CD8-positive, alpha-beta memory T cell (primary cell): ENCODE measurements at regions of chr3 and their contacts with region 1.

Region 1: DNA sequence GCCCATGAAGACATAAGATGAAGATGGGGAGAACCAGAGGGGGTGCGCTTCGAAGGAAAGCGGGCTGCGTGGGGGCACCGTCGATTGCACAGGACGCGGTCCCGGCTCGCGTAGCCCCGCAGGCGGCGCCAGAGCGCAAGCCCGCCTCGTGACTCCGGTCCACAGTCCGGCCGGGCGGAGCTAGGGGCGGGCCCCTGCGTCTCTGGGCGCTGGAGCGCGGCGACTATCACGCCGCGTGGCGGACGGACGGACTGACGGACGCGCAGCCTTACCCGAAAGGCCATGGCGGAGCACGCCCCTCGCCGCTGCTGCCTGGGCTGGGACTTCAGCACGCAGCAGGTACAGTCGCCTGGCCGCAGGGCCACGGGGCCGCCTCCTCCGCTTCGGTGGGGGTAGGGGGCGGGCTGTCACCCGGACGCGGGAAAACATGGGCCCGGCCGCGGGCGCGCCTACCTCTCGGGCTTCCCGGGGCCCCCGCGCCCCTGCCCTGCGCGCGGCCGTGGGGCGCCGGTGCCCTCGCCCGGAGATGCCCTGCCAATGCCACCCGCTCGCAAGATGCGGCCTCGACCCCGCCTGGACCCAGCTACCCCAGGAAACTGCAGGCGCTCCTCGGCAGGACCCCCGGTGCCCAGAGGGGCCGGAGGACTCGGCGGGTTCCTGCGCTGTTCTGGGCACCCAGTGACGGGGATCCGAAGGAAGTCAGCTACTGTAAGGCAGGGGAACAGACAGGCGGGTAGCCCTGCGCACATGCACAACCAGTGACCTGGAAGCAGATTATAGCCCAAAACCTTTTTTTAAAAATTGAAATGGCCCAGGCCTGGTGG is at the start of gene XYLB:
- DNase-seq: peak; percentile 54 to 77 (median 65)
- H3K4me3 ChIP-seq: peak within 1 kb of the TSS; percentile 59
- H3K4me3 Mint-ChIP-seq: peak within 1 kb of the TSS; percentile 74 to 93 (median 83)
- H3K27ac ChIP-seq: peak within 1 kb of the TSS; percentile 63
- H3K27ac Mint-ChIP-seq: peak within 1 kb of the TSS in 3 of 8 donors; percentile 45 to 81 (median 66)
- H3K4me1 ChIP-seq: no peaks in the 10 kb centered on the region
- H3K4me1 Mint-ChIP-seq: peaks cover 0 to 10% (median 2%) of the 10 kb centered on the region in 3 donors
- H3K27me3 ChIP-seq: no peaks in the 10 kb centered on the region
- H3K27me3 Mint-ChIP-seq: peaks cover 0 to 6% of the 10 kb centered on the region in 2 donors
- total RNA-seq, gene XYLB: 5.7 to 6.2 TPM

Region 2: DNA sequence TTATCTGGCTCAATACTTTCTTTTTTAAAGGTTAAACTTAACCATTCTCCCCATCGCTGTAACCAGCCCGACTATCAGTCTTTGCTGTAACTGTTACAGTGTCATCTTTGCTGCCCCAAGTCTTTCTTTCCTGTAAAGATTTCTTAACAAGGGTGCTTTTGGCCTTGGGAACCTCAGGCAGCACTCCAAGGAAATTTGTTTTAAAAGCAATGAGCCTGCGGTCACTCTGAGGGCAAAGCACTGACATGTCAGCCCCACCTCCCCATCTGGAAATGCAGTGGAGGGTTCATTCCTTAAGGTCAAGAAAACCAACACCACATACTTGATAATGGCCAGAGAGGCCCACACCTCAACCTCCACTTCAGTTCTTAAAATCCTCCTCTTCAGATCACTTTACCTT is 1405.1 kb before region 1 on chr3:
- CTCF ChIA-PET with region 1: no interaction called
- POLR2A ChIA-PET with region 1: no interaction called
- DNase-seq: no peak
- H3K4me3 ChIP-seq: no peak overlapping the region
- H3K4me3 Mint-ChIP-seq: peak overlapping the region in 2 of 7 donors; percentile 15 to 46
- H3K27ac ChIP-seq: peak overlapping the region; percentile 6
- H3K27ac Mint-ChIP-seq: peak overlapping the region in 5 of 8 donors; percentile 15 to 90 (median 38)
- H3K4me1 ChIP-seq: peaks cover 14% of the 10 kb centered on the region
- H3K4me1 Mint-ChIP-seq: peaks cover 23 to 51% (median 28%) of the 10 kb centered on the region in 3 donors
- H3K27me3 ChIP-seq: no peaks in the 10 kb centered on the region
- H3K27me3 Mint-ChIP-seq: no peaks in the 10 kb centered on the region

Region 3: DNA sequence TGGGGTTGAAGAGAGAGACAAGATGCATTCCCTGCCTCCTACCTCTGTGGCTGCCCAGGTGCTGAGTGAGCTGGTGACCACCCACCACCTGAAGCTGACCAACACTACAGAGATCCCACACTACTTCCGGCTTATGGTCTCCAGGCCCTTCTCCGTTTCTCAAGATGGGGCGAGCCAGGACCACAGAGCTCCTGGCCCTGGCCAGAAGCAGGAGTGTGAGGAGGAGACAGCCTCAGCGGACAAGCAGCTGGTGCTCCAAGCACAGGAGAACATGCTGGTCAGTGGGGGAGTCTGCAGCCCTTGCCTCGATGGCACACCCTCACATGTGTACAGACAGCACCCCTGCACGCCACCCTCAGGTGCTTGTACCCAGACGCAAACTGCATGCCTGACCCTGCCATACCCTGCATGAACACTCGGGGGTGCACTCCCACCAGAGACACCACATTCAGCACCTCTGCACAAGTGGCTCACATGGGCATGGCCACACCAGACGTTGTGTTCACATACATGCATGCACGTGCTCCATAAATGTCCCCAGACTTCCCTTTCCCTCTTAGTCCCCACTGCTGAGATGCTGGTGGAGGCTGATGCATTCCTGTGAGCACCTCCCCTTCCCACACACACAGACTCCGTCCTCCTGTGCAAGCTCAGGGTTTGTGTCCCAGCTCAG is 228.9 kb before region 1 on chr3:
- CTCF ChIA-PET with region 1: interaction called, 19 read pairs
- POLR2A ChIA-PET with region 1: no interaction called
- DNase-seq: peak; percentile 51 to 80 (median 57)
- H3K4me3 ChIP-seq: no peak overlapping the region
- H3K4me3 Mint-ChIP-seq: no peak overlapping the region
- H3K27ac ChIP-seq: no peak overlapping the region
- H3K27ac Mint-ChIP-seq: peak overlapping the region in 4 of 8 donors; percentile 51 to 88 (median 63)
- H3K4me1 ChIP-seq: no peaks in the 10 kb centered on the region
- H3K4me1 Mint-ChIP-seq: peaks cover 4 to 11% (median 5%) of the 10 kb centered on the region in 3 donors
- H3K27me3 ChIP-seq: no peaks in the 10 kb centered on the region
- H3K27me3 Mint-ChIP-seq: no peaks in the 10 kb centered on the region

Region 4: DNA sequence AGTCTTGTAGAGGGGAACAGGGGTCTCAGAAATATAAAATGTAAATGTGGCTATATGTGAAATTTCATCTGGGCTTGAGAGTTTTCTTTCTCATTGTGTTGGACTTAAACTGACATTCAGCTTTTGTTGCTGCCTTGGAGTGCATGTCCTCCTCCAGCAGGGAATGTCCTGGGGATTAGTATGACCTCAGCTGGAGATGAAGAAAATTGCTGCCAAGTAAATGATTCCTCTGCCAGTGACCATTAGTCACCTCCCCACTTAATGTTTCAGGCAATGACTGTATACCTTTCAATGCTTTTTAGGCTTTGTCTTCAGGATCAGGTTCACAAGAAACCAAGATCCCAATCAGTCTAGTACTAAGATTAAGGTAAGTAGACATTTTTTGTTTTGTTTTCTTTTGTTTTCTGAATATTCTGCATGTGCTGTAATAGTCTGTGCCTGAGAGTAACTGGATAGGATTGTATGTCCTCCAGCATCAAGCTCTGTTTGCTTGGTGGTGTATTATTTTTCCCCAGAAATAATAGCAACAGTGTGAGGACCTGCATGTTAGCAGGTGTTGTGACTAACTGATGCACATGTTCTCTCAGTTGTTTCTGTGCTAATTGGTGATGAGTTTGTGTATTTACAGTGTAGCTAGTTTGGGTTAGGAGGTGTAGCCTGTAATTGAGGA is 99.3 kb before region 1 on chr3:
- CTCF ChIA-PET with region 1: no interaction called
- POLR2A ChIA-PET with region 1: no interaction called
- DNase-seq: no peak
- H3K4me3 ChIP-seq: no peak overlapping the region
- H3K4me3 Mint-ChIP-seq: no peak overlapping the region
- H3K27ac ChIP-seq: no peak overlapping the region
- H3K27ac Mint-ChIP-seq: peak overlapping the region in 4 of 8 donors; percentile 38 to 67 (median 56)
- H3K4me1 ChIP-seq: no peaks in the 10 kb centered on the region
- H3K4me1 Mint-ChIP-seq: peaks cover 3 to 10% (median 6%) of the 10 kb centered on the region in 3 donors
- H3K27me3 ChIP-seq: no peaks in the 10 kb centered on the region
- H3K27me3 Mint-ChIP-seq: no peaks in the 10 kb centered on the region

Region 5: GRCh38 chr3:38334142-38335055 is 12.4 kb before region 1 on chr3:
- CTCF ChIA-PET with region 1: interaction called, 20 read pairs
- POLR2A ChIA-PET with region 1: no interaction called
- DNase-seq: no peak
- H3K4me3 ChIP-seq: no peak overlapping the region
- H3K4me3 Mint-ChIP-seq: no peak overlapping the region
- H3K27ac ChIP-seq: no peak overlapping the region
- H3K27ac Mint-ChIP-seq: no peak overlapping the region
- H3K4me1 ChIP-seq: no peaks in the 10 kb centered on the region
- H3K4me1 Mint-ChIP-seq: no peaks in the 10 kb centered on the region
- H3K27me3 ChIP-seq: no peaks in the 10 kb centered on the region
- H3K27me3 Mint-ChIP-seq: peaks cover 3 to 9% of the 10 kb centered on the region in 2 donors

Region 6: DNA sequence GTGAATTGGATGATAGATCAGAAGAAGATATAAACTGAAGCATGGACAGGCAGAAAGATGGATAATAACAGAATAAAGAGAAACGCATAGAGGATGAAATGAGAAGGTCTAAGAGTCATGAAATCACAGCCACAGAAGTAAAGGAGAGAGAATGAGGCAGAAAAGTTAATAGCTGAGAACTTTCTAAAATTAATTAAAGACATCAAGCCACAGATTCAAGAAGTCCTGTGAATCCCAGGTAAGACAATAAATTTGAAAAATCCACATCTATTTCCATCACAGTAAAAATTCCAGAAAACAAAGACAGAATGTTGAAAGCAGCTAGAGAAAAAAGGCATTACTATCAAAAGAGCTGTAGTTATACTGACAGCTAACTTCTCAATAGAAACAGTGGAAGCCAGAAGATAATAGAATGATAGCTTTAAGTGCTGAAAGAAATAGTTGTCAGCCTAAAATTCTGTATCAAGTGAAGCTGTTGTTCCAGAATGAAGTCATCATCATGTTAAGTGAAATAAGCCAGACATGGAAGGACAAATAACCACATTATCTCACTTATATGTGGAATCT is 118.9 kb after region 1 on chr3:
- CTCF ChIA-PET with region 1: interaction called, 12 read pairs
- POLR2A ChIA-PET with region 1: no interaction called
- DNase-seq: no peak
- H3K4me3 ChIP-seq: no peak overlapping the region
- H3K4me3 Mint-ChIP-seq: no peak overlapping the region
- H3K27ac ChIP-seq: no peak overlapping the region
- H3K27ac Mint-ChIP-seq: no peak overlapping the region
- H3K4me1 ChIP-seq: no peaks in the 10 kb centered on the region
- H3K4me1 Mint-ChIP-seq: peaks cover 0 to 7% (median 4%) of the 10 kb centered on the region in 3 donors
- H3K27me3 ChIP-seq: no peaks in the 10 kb centered on the region
- H3K27me3 Mint-ChIP-seq: no peaks in the 10 kb centered on the region

Region 7: DNA sequence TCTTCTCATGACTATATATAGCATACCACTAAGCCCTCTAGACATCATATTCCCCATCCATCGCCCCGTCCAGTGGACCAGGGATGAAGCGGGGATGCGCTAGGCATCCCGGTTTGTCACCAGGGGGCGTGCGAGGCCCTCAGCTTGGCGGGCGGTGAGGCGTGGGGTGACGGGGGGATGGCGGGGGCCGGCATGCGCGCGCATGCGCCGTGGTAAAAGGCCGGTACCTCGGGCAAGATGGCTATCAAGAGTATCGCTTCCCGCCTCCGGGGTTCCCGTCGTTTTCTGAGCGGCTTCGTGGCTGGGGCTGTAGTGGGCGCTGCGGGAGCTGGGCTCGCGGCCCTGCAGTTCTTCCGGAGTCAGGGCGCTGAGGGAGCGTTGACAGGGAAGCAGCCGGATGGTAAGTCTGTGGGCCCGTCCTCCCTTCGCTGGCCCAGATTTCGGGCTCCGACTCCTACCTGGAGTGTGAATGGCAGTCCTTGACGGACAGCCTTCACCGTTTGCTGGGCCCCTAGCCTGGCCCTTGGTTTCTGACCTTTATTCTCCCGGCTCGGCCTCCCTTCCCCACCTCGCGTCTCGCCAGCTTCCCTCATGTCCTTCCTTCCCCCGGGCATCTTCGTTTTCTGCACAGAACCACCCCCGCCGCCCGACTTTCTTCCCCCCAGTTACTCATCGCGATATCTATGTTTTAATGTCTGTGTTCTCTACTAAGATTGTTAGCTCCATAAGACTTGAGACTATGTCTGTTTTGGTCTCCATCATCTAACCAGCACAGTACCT is 149.5 kb after region 1 on chr3 and contains the start of gene EXOG:
- CTCF ChIA-PET with region 1: interaction called, 17 read pairs
- POLR2A ChIA-PET with region 1: no interaction called
- DNase-seq: peak; percentile 85 to 96 (median 94)
- H3K4me3 ChIP-seq: peak within 1 kb of the TSS; percentile 87
- H3K4me3 Mint-ChIP-seq: peak within 1 kb of the TSS; percentile 95 to 99 (median 97)
- H3K27ac ChIP-seq: peak within 1 kb of the TSS; percentile 49
- H3K27ac Mint-ChIP-seq: peak within 1 kb of the TSS; percentile 71 to 98 (median 90)
- H3K4me1 ChIP-seq: peaks cover 10% of the 10 kb centered on the region
- H3K4me1 Mint-ChIP-seq: peaks cover 18 to 33% (median 30%) of the 10 kb centered on the region in 3 donors
- H3K27me3 ChIP-seq: no peaks in the 10 kb centered on the region
- H3K27me3 Mint-ChIP-seq: no peaks in the 10 kb centered on the region
- total RNA-seq, gene EXOG: 17.7 to 19.0 TPM